CD8-positive, alpha-beta memory T cell (primary cell): ENCODE measurements at regions of chr12 and their contacts with region 1.

Region 1: GRCh38 chr12:71746983-71747611 is 7.6 kb upstream of the RAB21 start:
- DNase-seq: peak; percentile 12 to 62 (median 52)
- H3K4me3 ChIP-seq: no peak overlapping the region
- H3K4me3 Mint-ChIP-seq: no peak overlapping the region
- H3K27ac ChIP-seq: no peak overlapping the region
- H3K27ac Mint-ChIP-seq: no peak overlapping the region
- H3K4me1 ChIP-seq: no peaks in the 10 kb centered on the region
- H3K4me1 Mint-ChIP-seq: no peaks in the 10 kb centered on the region
- H3K27me3 ChIP-seq: no peaks in the 10 kb centered on the region
- H3K27me3 Mint-ChIP-seq: peaks cover 16 to 31% of the 10 kb centered on the region in 2 donors

Region 2: DNA sequence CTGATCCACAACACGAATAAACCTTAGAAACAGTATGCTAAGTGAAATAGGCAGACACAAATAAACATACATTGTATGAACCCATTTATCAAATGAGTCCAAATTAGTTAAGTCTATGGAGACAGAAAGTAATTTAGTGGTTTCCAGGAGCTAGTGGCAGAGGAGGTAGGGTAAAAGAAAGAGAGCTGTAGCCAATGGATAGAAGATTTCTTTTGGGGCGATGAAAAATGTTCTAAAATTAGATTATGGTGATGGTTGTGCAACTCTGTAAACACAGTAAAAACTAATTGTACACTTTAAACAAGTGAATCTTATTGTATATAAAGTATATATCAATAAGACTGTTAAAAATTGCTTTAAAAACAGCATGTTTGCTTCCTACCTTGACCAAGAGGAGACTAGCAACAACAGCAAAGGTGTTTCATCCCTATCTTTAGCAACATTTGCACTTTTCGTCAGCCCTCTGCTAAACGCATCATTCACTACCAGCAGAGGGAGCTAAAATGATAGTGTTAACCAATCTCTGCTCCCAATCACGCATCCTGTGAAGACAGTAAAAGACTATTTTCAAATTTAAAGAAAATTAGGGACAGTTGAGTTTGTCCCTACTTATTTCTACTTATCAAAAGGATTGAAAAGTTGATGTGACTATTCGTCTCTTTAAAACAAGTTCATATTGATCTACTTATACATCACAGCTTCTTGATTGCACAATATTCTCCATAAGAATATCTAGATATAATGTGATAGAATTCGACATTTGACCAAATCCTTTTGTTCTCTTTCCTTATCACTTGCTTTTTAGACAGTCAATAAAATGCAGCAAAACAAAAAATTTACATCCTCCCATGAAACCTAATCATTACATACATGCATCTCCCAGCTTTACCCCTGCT is 331.5 kb before region 1 on chr12:
- CTCF ChIA-PET with region 1: interaction called, 20 read pairs
- POLR2A ChIA-PET with region 1: no interaction called
- DNase-seq: peak in 2 of 5 donors; percentile 27 to 37
- H3K4me3 ChIP-seq: no peak overlapping the region
- H3K4me3 Mint-ChIP-seq: no peak overlapping the region
- H3K27ac ChIP-seq: no peak overlapping the region
- H3K27ac Mint-ChIP-seq: no peak overlapping the region
- H3K4me1 ChIP-seq: no peaks in the 10 kb centered on the region
- H3K4me1 Mint-ChIP-seq: no peaks in the 10 kb centered on the region
- H3K27me3 ChIP-seq: no peaks in the 10 kb centered on the region
- H3K27me3 Mint-ChIP-seq: peaks cover 8 to 13% of the 10 kb centered on the region in 2 donors

Region 3: GRCh38 chr12:71636704-71637115 is 110.4 kb before region 1 on chr12:
- CTCF ChIA-PET with region 1: interaction called, 17 read pairs
- POLR2A ChIA-PET with region 1: no interaction called
- DNase-seq: peak in 2 of 5 donors; percentile 33 to 47
- H3K4me3 ChIP-seq: no peak overlapping the region
- H3K4me3 Mint-ChIP-seq: no peak overlapping the region
- H3K27ac ChIP-seq: no peak overlapping the region
- H3K27ac Mint-ChIP-seq: peak overlapping the region; percentile 23 to 95 (median 77)
- H3K4me1 ChIP-seq: no peaks in the 10 kb centered on the region
- H3K4me1 Mint-ChIP-seq: peaks cover 9 to 24% (median 21%) of the 10 kb centered on the region in 3 donors
- H3K27me3 ChIP-seq: no peaks in the 10 kb centered on the region
- H3K27me3 Mint-ChIP-seq: no peaks in the 10 kb centered on the region

Region 4: DNA sequence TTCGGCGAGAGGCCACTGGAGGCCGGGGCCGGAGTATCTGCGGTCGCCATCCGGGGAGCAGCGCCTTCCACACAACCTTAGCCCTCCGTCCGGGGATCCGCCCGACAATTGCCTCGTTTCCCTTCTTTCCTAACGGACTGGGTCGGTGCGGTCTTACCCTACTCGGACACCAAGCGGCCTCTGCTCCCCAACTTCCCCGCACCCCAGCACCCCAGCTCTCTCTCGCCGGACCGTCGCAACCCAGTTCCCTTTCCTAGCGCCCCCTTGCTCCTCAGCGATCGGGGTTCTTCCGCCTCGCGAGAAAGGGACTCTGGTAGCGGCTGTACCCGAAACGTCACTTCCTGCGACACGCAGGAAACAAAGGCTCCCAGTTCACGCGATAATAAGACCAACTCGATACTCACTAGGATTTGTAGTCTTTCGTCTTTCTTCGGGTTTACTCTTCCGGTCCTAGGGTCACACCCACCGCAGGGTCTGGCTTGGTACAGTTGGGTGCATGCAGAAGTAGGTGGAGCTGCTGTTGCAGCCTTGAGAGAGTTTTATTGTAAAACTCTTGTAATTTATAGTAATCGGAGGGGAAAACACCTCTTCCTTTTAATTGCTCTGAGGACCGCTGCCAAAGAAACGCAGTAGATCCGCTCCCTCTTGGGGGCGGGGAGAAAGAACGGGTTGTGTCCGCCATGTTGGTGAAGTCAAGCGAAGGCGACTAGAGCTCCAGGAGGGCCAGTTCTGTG is 83.4 kb before region 1 on chr12 and contains the start of gene ZFC3H1:
- CTCF ChIA-PET with region 1: interaction called, 15 read pairs
- POLR2A ChIA-PET with region 1: interaction called, 3 read pairs
- DNase-seq: peak; percentile 85 to 96 (median 95)
- H3K4me3 ChIP-seq: peak within 1 kb of the TSS; percentile 90
- H3K4me3 Mint-ChIP-seq: peak within 1 kb of the TSS; percentile 94 to 100 (median 99)
- H3K27ac ChIP-seq: peak within 1 kb of the TSS; percentile 99
- H3K27ac Mint-ChIP-seq: peak within 1 kb of the TSS; percentile 97 to 100 (median 100)
- H3K4me1 ChIP-seq: peaks cover 33% of the 10 kb centered on the region
- H3K4me1 Mint-ChIP-seq: peaks cover 49 to 63% (median 59%) of the 10 kb centered on the region in 3 donors
- H3K27me3 ChIP-seq: no peaks in the 10 kb centered on the region
- H3K27me3 Mint-ChIP-seq: peaks cover 0 to 3% of the 10 kb centered on the region in 2 donors
- total RNA-seq, gene ZFC3H1: 37.5 to 42.6 TPM

Region 5: GRCh38 chr12:71685914-71686665 is 61.0 kb before region 1 on chr12 and contains the start of gene TMEM19:
- CTCF ChIA-PET with region 1: interaction called, 15 read pairs
- POLR2A ChIA-PET with region 1: no interaction called
- DNase-seq: peak; percentile 74 to 90 (median 85)
- H3K4me3 ChIP-seq: peak within 1 kb of the TSS; percentile 87
- H3K4me3 Mint-ChIP-seq: peak within 1 kb of the TSS; percentile 90 to 96 (median 93)
- H3K27ac ChIP-seq: peak within 1 kb of the TSS; percentile 77
- H3K27ac Mint-ChIP-seq: peak within 1 kb of the TSS; percentile 58 to 97 (median 94)
- H3K4me1 ChIP-seq: peaks cover 24% of the 10 kb centered on the region
- H3K4me1 Mint-ChIP-seq: peaks cover 20 to 48% (median 37%) of the 10 kb centered on the region in 3 donors
- H3K27me3 ChIP-seq: no peaks in the 10 kb centered on the region
- H3K27me3 Mint-ChIP-seq: peaks cover 0 to 2% of the 10 kb centered on the region in 2 donors
- total RNA-seq, gene TMEM19: 18.6 to 21.4 TPM

Region 6: DNA sequence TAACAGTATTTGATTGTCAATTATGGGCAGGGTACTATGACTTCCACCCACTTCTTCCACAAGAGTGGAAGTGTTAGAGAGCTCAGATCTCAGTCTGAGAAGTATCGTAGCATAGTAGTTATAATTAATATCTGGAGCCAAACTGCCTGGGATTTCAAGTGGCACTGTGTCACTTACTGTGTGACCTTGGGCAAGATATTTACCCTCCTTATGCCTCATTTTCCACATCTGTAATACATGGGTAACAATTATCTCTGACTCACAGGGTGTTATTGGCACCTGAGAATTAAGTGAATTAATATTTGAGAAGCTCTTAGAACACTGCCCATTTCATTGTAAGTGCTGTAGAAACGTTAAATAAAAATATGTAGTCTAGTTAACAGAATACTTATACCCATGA is 19.1 kb after region 1 on chr12:
- CTCF ChIA-PET with region 1: interaction called, 11 read pairs
- POLR2A ChIA-PET with region 1: no interaction called
- DNase-seq: no peak
- H3K4me3 ChIP-seq: no peak overlapping the region
- H3K4me3 Mint-ChIP-seq: peak overlapping the region in 2 of 7 donors; percentile 28 to 32
- H3K27ac ChIP-seq: no peak overlapping the region
- H3K27ac Mint-ChIP-seq: peak overlapping the region in 1 of 8 donors; percentile 39
- H3K4me1 ChIP-seq: peaks cover 38% of the 10 kb centered on the region
- H3K4me1 Mint-ChIP-seq: peaks cover 61 to 73% (median 73%) of the 10 kb centered on the region in 3 donors
- H3K27me3 ChIP-seq: no peaks in the 10 kb centered on the region
- H3K27me3 Mint-ChIP-seq: no peaks in the 10 kb centered on the region